ENCODE measurements at regions of chr1 and their contacts with region 1.

Region 1: DNA sequence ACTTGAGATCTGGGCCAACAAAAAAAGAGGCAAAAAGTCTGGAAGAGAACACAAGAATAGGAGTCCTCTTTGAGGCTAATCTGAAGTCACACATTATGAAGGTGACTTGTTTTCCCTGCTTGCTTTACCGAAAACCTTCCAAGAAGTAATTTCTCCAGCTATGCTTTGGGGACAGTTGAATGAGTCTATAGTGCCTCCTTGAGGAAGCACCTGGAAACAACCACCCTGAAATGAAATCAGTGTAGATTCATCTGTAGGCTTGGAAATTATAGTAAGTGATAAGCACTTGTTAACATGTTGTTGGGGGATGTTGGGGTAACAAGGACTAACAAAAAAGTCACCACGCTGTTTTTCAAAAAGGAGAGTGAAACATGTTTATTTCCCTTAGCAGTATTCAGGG is 23.4 kb upstream of the RPTN start:
- DNase-seq: no peak
- H3K4me3 ChIP-seq: no peak overlapping the region
- H3K27ac ChIP-seq: no peak overlapping the region
- H3K4me1 ChIP-seq: no peaks in the 10 kb centered on the region
- H3K27me3 ChIP-seq: peaks cover 2% of the 10 kb centered on the region
- CTCF ChIP-seq: no peak
- EP300 ChIP-seq: no peak
- POLR2A ChIP-seq: no peak

Region 2: GRCh38 chr1:152052606-152053005 is 129.8 kb before region 1 on chr1:
- in situ Hi-C with region 1: loop called in 3 of 4 experiments (anchors 5 to 10 kb)
- intact Hi-C with region 1: loop called (anchors 1 kb)
- DNase-seq: peak; percentile 88
- H3K4me3 ChIP-seq: no peak overlapping the region
- H3K27ac ChIP-seq: no peak overlapping the region
- H3K4me1 ChIP-seq: peaks cover 11 to 14% (median 13%) of the 10 kb centered on the region in 4 donors
- H3K27me3 ChIP-seq: peaks cover 45% of the 10 kb centered on the region
- CTCF ChIP-seq: peak; percentile 89 to 93 (median 91)
- EP300 ChIP-seq: no peak
- POLR2A ChIP-seq: no peak

Region 3: GRCh38 chr1:152061952-152062351 is 120.5 kb before region 1 on chr1:
- in situ Hi-C with region 1: loop called in 2 of 4 experiments (anchors 5 to 10 kb)
- intact Hi-C with region 1: no loop called
- DNase-seq: no peak
- H3K4me3 ChIP-seq: no peak overlapping the region
- H3K27ac ChIP-seq: no peak overlapping the region
- H3K4me1 ChIP-seq: no peaks in the 10 kb centered on the region
- H3K27me3 ChIP-seq: peaks cover 64% of the 10 kb centered on the region
- CTCF ChIP-seq: no peak
- EP300 ChIP-seq: no peak
- POLR2A ChIP-seq: no peak

Region 4: GRCh38 chr1:152162806-152163463 is 19.5 kb before region 1 on chr1:
- in situ Hi-C with region 1: no loop called
- intact Hi-C with region 1: loop called (anchors 1 kb)
- DNase-seq: no peak
- H3K4me3 ChIP-seq: no peak overlapping the region
- H3K27ac ChIP-seq: no peak overlapping the region
- H3K4me1 ChIP-seq: no peaks in the 10 kb centered on the region
- H3K27me3 ChIP-seq: no peaks in the 10 kb centered on the region
- CTCF ChIP-seq: no peak
- EP300 ChIP-seq: no peak
- POLR2A ChIP-seq: no peak